IMR-90 (cell line): ENCODE measurements at regions of chr11 and their contacts with region 1.

Region 1: DNA sequence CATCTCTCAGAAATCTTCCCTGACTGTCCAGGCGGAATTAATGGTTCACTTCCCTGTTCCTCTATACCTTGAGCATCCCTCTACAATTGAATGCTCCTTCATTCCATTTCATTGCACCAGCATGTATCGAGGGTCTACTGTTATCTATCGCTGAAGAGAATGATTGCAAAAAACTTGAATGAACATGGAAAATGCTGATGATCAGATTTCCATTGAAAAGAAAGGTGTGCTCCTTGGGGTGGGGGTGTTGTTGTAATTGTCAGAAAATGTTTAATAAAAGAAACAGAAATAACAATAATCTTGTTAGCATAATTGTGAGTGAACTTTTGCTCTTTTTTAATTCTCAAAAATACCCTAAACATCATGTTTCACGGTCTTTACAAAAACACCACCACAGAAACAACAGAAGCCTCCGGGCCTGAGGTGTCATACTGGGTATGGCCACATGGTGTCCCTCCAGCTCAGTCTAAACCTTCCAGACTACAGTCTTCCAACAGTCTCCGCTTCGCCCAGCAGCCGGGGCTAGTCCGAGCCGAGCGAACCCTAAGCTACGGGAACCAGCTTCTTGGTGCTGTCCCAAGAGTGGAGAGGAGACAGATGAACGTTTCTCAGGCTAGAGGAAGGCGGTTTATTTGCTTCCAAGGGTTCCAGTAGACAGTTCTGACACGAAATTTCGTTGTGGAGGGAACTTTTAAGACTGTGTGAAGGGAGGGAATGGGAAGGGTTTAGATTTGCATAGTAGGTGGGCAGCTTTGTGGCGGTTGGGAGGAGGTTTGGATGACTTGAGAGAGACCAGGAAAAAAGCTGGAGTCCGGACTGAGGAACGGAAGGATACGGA is 75.8 kb upstream of the ZBED5 start:
- DNase-seq: peak; percentile 92
- ATAC-seq: peak; percentile 84
- H3K4me3 ChIP-seq: peak overlapping the region; percentile 40
- H3K27ac ChIP-seq: peak overlapping the region; percentile 41
- H3K4me1 ChIP-seq: peaks cover 5% of the 10 kb centered on the region
- H3K27me3 ChIP-seq: peaks cover 4% of the 10 kb centered on the region; the same call in 1 of the 2 replicates
- CTCF ChIP-seq: peak; percentile 98
- POLR2A ChIP-seq: peak; percentile 58; the same call in 1 of the 2 replicates
- RAD21 ChIP-seq: peak; percentile 93

Region 2: GRCh38 chr11:10792398-10792975 is 141.2 kb before region 1 on chr11:
- CTCF ChIA-PET with region 1: interaction called, 6 read pairs
- POLR2A ChIA-PET with region 1: no interaction called
- dilution Hi-C with region 1: no loop called
- in situ Hi-C with region 1: loop called (anchors 5 kb)
- intact Hi-C with region 1: loop called (anchors 5 kb)
- DNase-seq: peak; percentile 62
- ATAC-seq: peak; percentile 94
- H3K4me3 ChIP-seq: no peak overlapping the region
- H3K27ac ChIP-seq: no peak overlapping the region
- H3K4me1 ChIP-seq: no peaks in the 10 kb centered on the region
- H3K27me3 ChIP-seq: no peaks in the 10 kb centered on the region
- CTCF ChIP-seq: peak; percentile 93
- POLR2A ChIP-seq: no peak
- RAD21 ChIP-seq: peak; percentile 92

Region 3: DNA sequence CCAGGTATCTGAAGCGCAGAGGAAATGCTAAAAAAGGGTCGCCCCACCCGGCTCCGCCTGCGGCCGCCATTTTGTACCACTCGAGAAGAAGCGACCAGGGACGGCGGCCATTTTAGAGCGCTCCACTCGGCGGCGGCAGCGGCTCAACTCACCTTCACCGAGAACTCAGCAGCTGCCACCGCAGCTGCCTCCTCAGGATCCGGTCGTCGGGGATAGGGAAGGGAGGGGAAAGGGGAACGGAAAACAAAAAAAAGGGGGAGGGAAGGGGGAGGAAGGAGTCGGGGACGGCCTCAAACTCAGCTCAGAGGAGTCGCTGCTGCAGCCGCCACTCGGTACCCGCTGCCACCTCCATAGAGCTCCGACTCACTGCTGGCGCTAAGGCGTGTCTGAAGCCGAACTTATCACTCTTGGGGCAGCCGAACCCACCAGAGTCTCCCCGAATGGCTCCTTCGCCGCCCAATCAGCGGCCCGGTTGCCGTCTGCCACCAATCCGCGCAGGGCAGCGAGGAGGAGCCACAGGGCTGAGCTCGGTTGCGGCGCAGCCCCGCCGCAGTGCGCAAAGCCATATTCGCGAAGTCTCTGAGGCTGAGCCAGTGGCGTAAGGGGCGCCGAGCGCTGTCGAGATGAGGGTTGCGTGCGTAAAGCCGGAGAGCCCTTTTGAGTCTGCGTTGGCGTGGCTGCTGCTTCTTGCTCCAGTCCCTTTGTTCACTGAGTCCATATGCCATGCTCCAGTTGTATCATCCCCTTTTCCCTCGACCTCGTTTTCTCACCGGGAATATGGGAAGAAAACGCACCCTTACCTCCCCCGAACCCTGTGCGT is 124.9 kb before region 1 on chr11 and contains the start of gene EIF4G2:
- CTCF ChIA-PET with region 1: no interaction called
- POLR2A ChIA-PET with region 1: interaction called, 5 read pairs
- dilution Hi-C with region 1: no loop called
- in situ Hi-C with region 1: no loop called
- intact Hi-C with region 1: loop called (anchors 1 kb)
- DNase-seq: peak; percentile 99
- ATAC-seq: peak; percentile 95
- H3K4me3 ChIP-seq: peak within 1 kb of the TSS; percentile 96
- H3K27ac ChIP-seq: peak within 1 kb of the TSS; percentile 99
- H3K4me1 ChIP-seq: peaks cover 4% of the 10 kb centered on the region
- H3K27me3 ChIP-seq: no peaks in the 10 kb centered on the region
- CTCF ChIP-seq: no peak
- POLR2A ChIP-seq: peak; percentile 100
- RAD21 ChIP-seq: no peak; the same call in 1 of the 2 replicates
- total RNA-seq, gene EIF4G2: 1,144 and 1,216 TPM in 2 replicates

Region 4: GRCh38 chr11:10899121-10899830 is 34.4 kb before region 1 on chr11:
- CTCF ChIA-PET with region 1: interaction called, 5 read pairs
- POLR2A ChIA-PET with region 1: no interaction called
- dilution Hi-C with region 1: no loop called
- in situ Hi-C with region 1: no loop called
- intact Hi-C with region 1: loop called (anchors 2 kb)
- DNase-seq: no peak
- ATAC-seq: peak; percentile 61
- H3K4me3 ChIP-seq: no peak overlapping the region
- H3K27ac ChIP-seq: peak overlapping the region; percentile 92
- H3K4me1 ChIP-seq: peaks cover 31% of the 10 kb centered on the region
- H3K27me3 ChIP-seq: no peaks in the 10 kb centered on the region
- CTCF ChIP-seq: no peak
- POLR2A ChIP-seq: no peak
- RAD21 ChIP-seq: no peak

Region 5: DNA sequence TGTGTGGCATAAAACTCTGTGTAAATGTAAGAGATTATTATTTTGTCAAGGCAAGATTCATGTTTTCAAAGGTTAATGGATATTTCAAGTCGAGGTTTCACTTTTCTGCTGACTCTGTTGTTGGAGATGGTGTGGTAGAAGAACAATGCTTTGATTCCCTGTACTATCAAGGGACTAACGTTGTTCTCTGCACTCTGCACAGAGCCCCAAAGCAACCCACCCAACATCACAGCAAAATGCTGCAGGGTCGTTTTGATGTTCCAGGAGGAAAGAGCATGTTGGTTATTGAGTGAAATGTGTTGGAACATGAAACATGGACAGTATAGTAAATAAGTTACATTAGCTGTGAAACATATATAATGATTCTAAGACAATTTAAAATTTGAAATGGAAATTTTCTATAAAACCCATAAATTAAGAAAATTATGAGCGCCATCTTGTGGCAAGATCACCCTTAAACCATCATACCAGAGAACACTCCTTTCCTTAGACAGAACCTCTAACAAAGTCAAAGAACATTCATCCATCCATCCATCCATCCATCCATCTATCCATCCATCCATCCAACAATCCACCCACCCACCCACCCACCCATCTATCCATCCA is 88.6 kb after region 1 on chr11:
- CTCF ChIA-PET with region 1: interaction called, 13 read pairs
- POLR2A ChIA-PET with region 1: no interaction called
- dilution Hi-C with region 1: no loop called
- in situ Hi-C with region 1: no loop called
- intact Hi-C with region 1: loop called (anchors 1 kb)
- DNase-seq: peak; percentile 24
- ATAC-seq: peak; percentile 55; the same call in 1 of the 2 replicates
- H3K4me3 ChIP-seq: no peak overlapping the region
- H3K27ac ChIP-seq: no peak overlapping the region
- H3K4me1 ChIP-seq: peaks cover 1% of the 10 kb centered on the region; the same call in 1 of the 2 replicates
- H3K27me3 ChIP-seq: peaks cover 19% of the 10 kb centered on the region
- CTCF ChIP-seq: peak; percentile 62
- POLR2A ChIP-seq: no peak
- RAD21 ChIP-seq: peak; percentile 48

Region 6: DNA sequence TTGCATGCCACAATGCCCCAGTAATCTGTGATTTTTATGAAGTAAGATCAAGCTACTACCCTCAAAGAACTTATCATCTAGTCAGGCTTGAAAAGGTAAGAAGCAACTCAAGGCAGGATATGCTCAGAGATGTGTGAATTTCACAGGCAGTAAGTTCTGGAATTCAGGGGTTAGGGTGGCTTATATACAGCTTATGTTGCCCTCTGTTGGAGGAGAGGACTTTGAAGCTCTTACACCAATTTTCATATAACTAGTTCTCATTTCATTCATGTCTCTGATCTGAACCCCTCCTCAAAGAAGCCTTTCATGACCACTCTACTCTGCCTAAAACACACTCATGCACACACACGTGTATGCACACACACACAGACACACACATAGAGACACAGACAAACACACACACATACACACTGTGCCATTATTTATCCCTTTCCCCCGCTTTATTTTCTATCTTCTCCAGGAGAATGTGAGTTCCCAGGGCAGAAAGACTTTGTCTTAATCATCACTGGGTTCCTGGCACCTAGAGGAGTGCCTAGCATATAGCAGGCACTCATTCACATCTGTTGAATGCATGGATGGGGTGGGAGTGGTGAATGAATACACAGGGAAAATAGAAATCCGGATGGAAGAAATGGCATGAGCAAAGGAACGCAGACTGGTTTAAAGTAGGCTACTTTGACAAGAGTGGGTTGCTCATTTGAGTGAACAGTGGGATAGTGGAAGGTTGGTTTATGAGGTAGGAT is 144.8 kb after region 1 on chr11:
- CTCF ChIA-PET with region 1: interaction called, 5 read pairs
- POLR2A ChIA-PET with region 1: no interaction called
- dilution Hi-C with region 1: no loop called
- in situ Hi-C with region 1: no loop called
- intact Hi-C with region 1: loop called (anchors 5 kb)
- DNase-seq: peak; percentile 28
- ATAC-seq: peak; percentile 86
- H3K4me3 ChIP-seq: no peak overlapping the region
- H3K27ac ChIP-seq: no peak overlapping the region
- H3K4me1 ChIP-seq: no peaks in the 10 kb centered on the region
- H3K27me3 ChIP-seq: peaks cover 63% of the 10 kb centered on the region
- CTCF ChIP-seq: peak; percentile 37
- POLR2A ChIP-seq: no peak
- RAD21 ChIP-seq: no peak; the same call in 1 of the 2 replicates

Region 7: GRCh38 chr11:11787305-11788062 is 853.8 kb after region 1 on chr11:
- CTCF ChIA-PET with region 1: interaction called, 8 read pairs
- POLR2A ChIA-PET with region 1: interaction called, 3 read pairs
- dilution Hi-C with region 1: no loop called
- in situ Hi-C with region 1: loop called (anchors 5 kb)
- intact Hi-C with region 1: loop called (anchors 1 kb)
- DNase-seq: peak; percentile 70
- ATAC-seq: peak; percentile 96
- H3K4me3 ChIP-seq: no peak overlapping the region
- H3K27ac ChIP-seq: no peak overlapping the region
- H3K4me1 ChIP-seq: no peaks in the 10 kb centered on the region
- H3K27me3 ChIP-seq: peaks cover 13% of the 10 kb centered on the region
- CTCF ChIP-seq: peak; percentile 94
- POLR2A ChIP-seq: no peak
- RAD21 ChIP-seq: peak; percentile 95